Endothelial cell of umbilical vein (primary cell): ENCODE measurements at regions of chr6 and their contacts with region 1.

Region 1: GRCh38 chr6:113858480-113859348 is 1.6 kb downstream of the MARCKS start:
- DNase-seq: peak; percentile 92
- H3K4me3 ChIP-seq: peak overlapping the region; percentile 81 to 100 (median 100)
- H3K27ac ChIP-seq: peak overlapping the region; percentile 100
- H3K4me1 ChIP-seq: peaks cover 30% of the 10 kb centered on the region
- H3K27me3 ChIP-seq: no peaks in the 10 kb centered on the region
- CTCF ChIP-seq: peak; percentile 82 to 98
- POLR2A ChIP-seq: peak; percentile 85

Region 2: GRCh38 chr6:112780498-112781096 is 1078.1 kb before region 1 on chr6:
- CTCF ChIA-PET with region 1: interaction called, 28 read pairs
- POLR2A ChIA-PET with region 1: interaction called, 3 read pairs
- dilution Hi-C with region 1: no loop called
- intact Hi-C with region 1: loop called (anchors 1 kb)
- DNase-seq: peak; percentile 87
- H3K4me3 ChIP-seq: no peak overlapping the region
- H3K27ac ChIP-seq: peak overlapping the region; percentile 19
- H3K4me1 ChIP-seq: peaks cover 6% of the 10 kb centered on the region
- H3K27me3 ChIP-seq: no peaks in the 10 kb centered on the region
- CTCF ChIP-seq: peak; percentile 53 to 67
- POLR2A ChIP-seq: no peak

Region 3: DNA sequence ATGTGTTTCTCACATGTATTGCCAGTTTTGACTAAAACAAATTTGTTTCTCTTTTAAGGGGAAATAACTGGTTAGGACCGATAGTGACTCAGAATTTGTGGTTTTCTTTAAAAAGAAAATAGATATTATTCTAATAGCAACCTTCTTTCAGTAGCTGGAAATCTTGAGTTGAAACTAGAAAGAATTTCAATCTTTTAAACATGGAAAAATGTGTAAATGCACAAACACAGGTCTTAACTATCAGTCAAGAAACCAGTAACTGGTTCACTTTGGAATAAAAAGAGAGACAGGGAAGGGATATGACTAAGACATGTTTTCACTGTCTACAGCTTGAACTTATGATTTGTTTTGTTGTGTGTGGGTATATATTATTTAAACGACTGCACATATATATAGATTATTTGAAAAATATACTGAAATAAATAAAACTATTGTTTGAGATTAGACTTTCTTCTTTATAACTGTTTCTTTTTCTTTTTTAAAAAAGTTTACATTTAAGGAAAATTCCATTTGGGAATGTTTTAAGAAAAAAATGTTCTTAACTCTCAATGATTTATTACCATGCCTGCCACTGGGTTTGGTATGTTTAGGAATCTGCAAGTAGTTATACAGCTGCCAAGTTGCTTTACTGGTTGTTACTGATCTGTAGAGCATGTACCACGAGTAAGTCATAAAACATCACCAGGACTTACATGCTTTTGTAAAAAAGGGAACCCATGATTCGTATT is 754.9 kb before region 1 on chr6:
- CTCF ChIA-PET with region 1: interaction called, 21 read pairs
- POLR2A ChIA-PET with region 1: no interaction called
- dilution Hi-C with region 1: no loop called
- intact Hi-C with region 1: loop called (anchors 1 kb)
- DNase-seq: peak; percentile 88
- H3K4me3 ChIP-seq: peak overlapping the region in 1 of 3 experiments; percentile 12
- H3K27ac ChIP-seq: peak overlapping the region; percentile 98
- H3K4me1 ChIP-seq: peaks cover 27% of the 10 kb centered on the region
- H3K27me3 ChIP-seq: no peaks in the 10 kb centered on the region
- CTCF ChIP-seq: no peak
- POLR2A ChIP-seq: no peak

Region 4: DNA sequence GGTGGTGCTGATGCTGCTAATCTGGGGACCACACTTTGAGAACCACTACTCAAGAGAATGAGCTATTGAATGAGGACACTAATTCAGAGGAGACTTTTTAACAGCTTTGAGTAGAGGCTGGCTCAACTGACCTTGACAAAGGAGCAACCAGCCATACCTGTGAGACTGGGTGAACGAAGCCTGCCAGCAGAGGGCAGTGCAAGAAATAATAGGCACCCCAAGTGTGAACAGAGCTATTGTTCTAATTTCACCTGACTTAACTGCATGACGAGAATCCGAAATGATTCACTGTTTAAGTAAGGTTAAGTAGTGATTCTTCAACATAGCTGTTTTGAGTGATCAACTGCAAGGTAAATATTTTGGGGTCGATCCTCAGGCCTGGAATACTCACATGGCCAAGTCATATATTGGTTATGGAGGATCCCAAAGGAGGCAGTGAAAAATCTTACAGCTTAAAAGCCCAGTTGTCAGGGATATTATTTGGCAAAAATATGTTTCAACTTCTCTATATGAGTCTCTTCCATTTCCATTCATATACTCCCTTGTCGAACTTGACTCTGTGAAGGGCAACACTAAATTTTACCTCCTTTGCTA is 552.1 kb before region 1 on chr6:
- CTCF ChIA-PET with region 1: interaction called, 12 read pairs
- POLR2A ChIA-PET with region 1: no interaction called
- dilution Hi-C with region 1: no loop called
- intact Hi-C with region 1: loop called (anchors 1 kb)
- DNase-seq: peak; percentile 36
- H3K4me3 ChIP-seq: no peak overlapping the region
- H3K27ac ChIP-seq: no peak overlapping the region
- H3K4me1 ChIP-seq: no peaks in the 10 kb centered on the region
- H3K27me3 ChIP-seq: no peaks in the 10 kb centered on the region
- CTCF ChIP-seq: peak; percentile 39 to 49
- POLR2A ChIP-seq: no peak

Region 5: DNA sequence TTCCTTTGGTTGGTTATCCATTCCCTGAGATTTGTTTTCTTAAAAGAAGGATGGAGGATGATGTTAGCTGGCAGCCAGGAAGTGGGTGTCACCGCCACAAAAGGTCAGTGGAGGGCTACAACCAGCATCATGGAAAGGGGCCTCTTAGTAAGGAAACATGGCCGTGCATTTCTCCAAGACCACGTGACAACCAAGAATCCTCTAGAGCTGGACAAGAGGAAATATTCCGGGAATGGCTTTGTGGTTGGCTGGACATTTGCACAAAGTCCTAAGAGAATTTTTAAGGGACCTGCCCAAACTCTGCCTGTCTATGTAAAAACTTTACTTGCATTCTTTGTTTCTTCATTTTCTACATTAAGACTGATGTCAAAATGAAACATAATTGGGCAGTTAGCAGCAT is 401.5 kb before region 1 on chr6:
- CTCF ChIA-PET with region 1: interaction called, 7 read pairs
- POLR2A ChIA-PET with region 1: no interaction called
- dilution Hi-C with region 1: no loop called
- intact Hi-C with region 1: loop called (anchors 2 kb)
- DNase-seq: peak; percentile 67
- H3K4me3 ChIP-seq: no peak overlapping the region
- H3K27ac ChIP-seq: peak overlapping the region; percentile 24
- H3K4me1 ChIP-seq: peaks cover 22% of the 10 kb centered on the region
- H3K27me3 ChIP-seq: no peaks in the 10 kb centered on the region
- CTCF ChIP-seq: no peak
- POLR2A ChIP-seq: no peak

Region 6: GRCh38 chr6:113632220-113632864 is 226.4 kb before region 1 on chr6:
- CTCF ChIA-PET with region 1: interaction called, 16 read pairs
- POLR2A ChIA-PET with region 1: interaction called, 9 read pairs
- dilution Hi-C with region 1: no loop called
- intact Hi-C with region 1: loop called (anchors 1 kb)
- DNase-seq: peak; percentile 99
- H3K4me3 ChIP-seq: peak overlapping the region in 2 of 3 experiments; percentile 6 to 33
- H3K27ac ChIP-seq: peak overlapping the region; percentile 83
- H3K4me1 ChIP-seq: peaks cover 22% of the 10 kb centered on the region
- H3K27me3 ChIP-seq: no peaks in the 10 kb centered on the region
- CTCF ChIP-seq: no peak
- POLR2A ChIP-seq: no peak

Region 7: GRCh38 chr6:113809826-113810225 is 48.9 kb before region 1 on chr6:
- CTCF ChIA-PET with region 1: no interaction called
- POLR2A ChIA-PET with region 1: no interaction called
- dilution Hi-C with region 1: no loop called
- intact Hi-C with region 1: no loop called
- DNase-seq: no peak
- H3K4me3 ChIP-seq: no peak overlapping the region
- H3K27ac ChIP-seq: no peak overlapping the region
- H3K4me1 ChIP-seq: no peaks in the 10 kb centered on the region
- H3K27me3 ChIP-seq: no peaks in the 10 kb centered on the region
- CTCF ChIP-seq: no peak
- POLR2A ChIP-seq: no peak

Region 8: DNA sequence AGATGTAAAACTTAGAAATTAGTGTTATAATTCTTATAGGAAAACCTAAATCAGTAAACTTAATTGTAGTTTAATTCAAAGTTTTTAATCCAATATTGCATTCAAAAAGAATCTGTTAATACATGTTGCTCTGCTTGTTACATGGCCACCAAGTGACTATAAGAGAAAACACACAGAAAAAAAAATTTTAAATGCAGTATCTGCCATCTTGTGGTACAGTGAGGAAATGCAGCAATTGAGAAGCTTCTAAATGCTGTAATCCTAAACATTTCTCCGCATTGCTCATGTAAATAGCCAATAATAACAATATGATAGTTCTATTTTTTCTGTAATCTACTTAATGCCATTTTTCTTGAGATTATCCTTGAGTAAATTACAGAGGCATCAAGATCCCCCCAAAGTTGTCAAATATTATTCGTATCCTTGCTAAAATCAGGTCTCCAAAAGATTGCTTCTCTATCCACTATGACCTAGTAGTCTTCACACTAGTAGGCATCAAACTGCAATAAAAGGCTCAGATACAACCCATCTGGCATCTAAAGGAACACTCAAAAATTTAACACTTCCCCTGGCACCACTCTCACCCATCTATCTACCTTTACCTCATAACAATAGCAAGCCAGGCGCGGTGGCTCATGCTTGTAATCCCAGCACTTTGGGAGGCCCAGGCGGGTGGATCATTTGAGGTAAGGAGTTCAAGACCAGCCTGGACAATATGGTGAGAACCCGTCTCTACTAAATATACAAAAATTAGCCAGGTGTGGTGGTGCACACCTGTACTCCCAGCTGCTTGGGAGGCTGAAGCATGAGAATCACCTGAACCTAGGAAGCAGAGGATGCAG is 77.6 kb after region 1 on chr6:
- CTCF ChIA-PET with region 1: interaction called, 14 read pairs
- POLR2A ChIA-PET with region 1: no interaction called
- dilution Hi-C with region 1: no loop called
- intact Hi-C with region 1: no loop called
- DNase-seq: peak; percentile 86
- H3K4me3 ChIP-seq: no peak overlapping the region
- H3K27ac ChIP-seq: no peak overlapping the region
- H3K4me1 ChIP-seq: no peaks in the 10 kb centered on the region
- H3K27me3 ChIP-seq: no peaks in the 10 kb centered on the region
- CTCF ChIP-seq: peak; percentile 52
- POLR2A ChIP-seq: no peak

Region 9: GRCh38 chr6:113994918-113995342 is 136.2 kb after region 1 on chr6:
- CTCF ChIA-PET with region 1: no interaction called
- POLR2A ChIA-PET with region 1: no interaction called
- dilution Hi-C with region 1: no loop called
- intact Hi-C with region 1: no loop called
- DNase-seq: peak; percentile 91
- H3K4me3 ChIP-seq: no peak overlapping the region
- H3K27ac ChIP-seq: peak overlapping the region; percentile 84
- H3K4me1 ChIP-seq: peaks cover 22% of the 10 kb centered on the region
- H3K27me3 ChIP-seq: peaks cover 0 to 2% of the 10 kb centered on the region in 2 experiments
- CTCF ChIP-seq: peak; percentile 72 to 95
- POLR2A ChIP-seq: no peak